ENCODE measurements at regions of chr3 and their contacts with region 1.

Region 1: DNA sequence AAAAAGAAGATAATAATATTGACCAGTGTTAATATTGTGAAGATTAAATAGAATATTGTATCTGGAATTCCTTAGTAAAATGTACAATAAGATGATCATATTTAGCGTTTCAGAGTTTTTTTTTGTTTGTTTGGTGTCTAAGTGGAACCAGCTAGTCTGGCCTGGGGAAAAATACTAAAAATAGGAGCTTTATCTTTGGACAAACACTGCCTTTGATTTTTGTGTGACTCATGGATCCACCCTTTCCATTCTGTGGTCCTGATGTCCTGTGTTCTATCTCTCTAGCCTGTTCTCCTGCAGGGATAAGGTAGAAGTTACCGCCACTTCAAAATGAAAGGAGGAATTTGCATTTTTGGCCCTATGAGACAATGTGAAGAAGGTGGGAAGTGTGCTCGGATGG is 79.7 kb upstream of the CRBN start:
- DNase-seq: peak in 1 of 2 experiments; percentile 22
- H3K4me3 ChIP-seq: no peak overlapping the region
- H3K4me3 Mint-ChIP-seq: no peak overlapping the region
- H3K27ac Mint-ChIP-seq: no peak overlapping the region
- H3K4me1 ChIP-seq: peaks cover 23% of the 10 kb centered on the region
- H3K4me1 Mint-ChIP-seq: peaks cover 14% of the 10 kb centered on the region
- H3K27me3 ChIP-seq: no peaks in the 10 kb centered on the region
- H3K27me3 Mint-ChIP-seq: no peaks in the 10 kb centered on the region
- CTCF ChIP-seq: no peak

Region 2: GRCh38 chr3:3179407-3180094 is 79.6 kb before region 1 on chr3 and contains the start of gene CRBN:
- CTCF ChIA-PET with region 1: no interaction called
- POLR2A ChIA-PET with region 1: no interaction called
- intact Hi-C with region 1: no loop called
- DNase-seq: peak; percentile 83 to 91
- H3K4me3 ChIP-seq: peak within 1 kb of the TSS; percentile 100
- H3K4me3 Mint-ChIP-seq: peak within 1 kb of the TSS; percentile 83
- H3K27ac Mint-ChIP-seq: peak within 1 kb of the TSS; percentile 45
- H3K4me1 ChIP-seq: peaks cover 9% of the 10 kb centered on the region
- H3K4me1 Mint-ChIP-seq: peaks cover 13% of the 10 kb centered on the region
- H3K27me3 ChIP-seq: no peaks in the 10 kb centered on the region; the same call in 1 of the 2 replicates
- H3K27me3 Mint-ChIP-seq: peaks cover 4% of the 10 kb centered on the region
- CTCF ChIP-seq: peak; percentile 86 to 90
- total RNA-seq, gene CRBN: 38.0 and 42.1 TPM in 2 replicates

Region 3: DNA sequence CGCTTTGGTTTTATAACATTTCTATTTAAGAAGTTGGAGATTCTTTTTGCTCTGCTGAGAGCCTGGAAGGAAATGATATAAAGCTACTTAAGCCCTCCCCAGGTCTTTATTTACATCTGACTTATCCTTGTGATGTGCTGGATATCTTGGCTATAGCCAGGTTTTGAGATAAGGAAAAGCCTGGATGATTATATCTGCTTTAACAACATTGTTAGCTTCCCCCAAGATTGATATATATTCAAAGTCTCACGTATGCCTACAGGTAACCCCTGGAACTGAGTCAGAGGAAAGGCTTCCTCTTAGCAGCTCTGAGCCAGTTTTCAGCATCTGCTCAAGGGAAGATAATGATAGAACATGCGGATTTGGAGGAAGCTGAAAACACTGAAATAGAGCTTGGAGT is 18.2 kb before region 1 on chr3:
- CTCF ChIA-PET with region 1: no interaction called
- POLR2A ChIA-PET with region 1: no interaction called
- intact Hi-C with region 1: loop called (anchors 2 kb)
- DNase-seq: no peak
- H3K4me3 ChIP-seq: no peak overlapping the region
- H3K4me3 Mint-ChIP-seq: no peak overlapping the region
- H3K27ac Mint-ChIP-seq: no peak overlapping the region
- H3K4me1 ChIP-seq: no peaks in the 10 kb centered on the region
- H3K4me1 Mint-ChIP-seq: peaks cover 6% of the 10 kb centered on the region
- H3K27me3 ChIP-seq: no peaks in the 10 kb centered on the region; the same call in 1 of the 2 replicates
- H3K27me3 Mint-ChIP-seq: no peaks in the 10 kb centered on the region
- CTCF ChIP-seq: no peak

Region 4: GRCh38 chr3:3302964-3303363 is 43.8 kb after region 1 on chr3:
- CTCF ChIA-PET with region 1: no interaction called
- POLR2A ChIA-PET with region 1: no interaction called
- intact Hi-C with region 1: no loop called
- DNase-seq: no peak
- H3K4me3 ChIP-seq: no peak overlapping the region
- H3K4me3 Mint-ChIP-seq: no peak overlapping the region
- H3K27ac Mint-ChIP-seq: no peak overlapping the region
- H3K4me1 ChIP-seq: no peaks in the 10 kb centered on the region
- H3K4me1 Mint-ChIP-seq: peaks cover 6% of the 10 kb centered on the region
- H3K27me3 ChIP-seq: no peaks in the 10 kb centered on the region
- H3K27me3 Mint-ChIP-seq: peaks cover 6% of the 10 kb centered on the region
- CTCF ChIP-seq: no peak